Activated CD8-positive, alpha-beta T cell treated with anti-CD3 and anti-CD28 coated beads, Interleukin-2, amount 10 ng/mL, durations not matched to agents 7 days and 5 days (primary cell): ENCODE measurements at regions of chr11 and their contacts with region 1.

Region 1: GRCh38 chr11:6705905-6706535 is 22.9 kb upstream of the MRPL17 start:
- DNase-seq: peak; percentile 53
- ATAC-seq: peak; percentile 47
- H3K4me3 Mint-ChIP-seq: no peak overlapping the region
- H3K27ac Mint-ChIP-seq: peak overlapping the region; percentile 51
- H3K4me1 Mint-ChIP-seq: peaks cover 6% of the 10 kb centered on the region
- H3K27me3 Mint-ChIP-seq: no peaks in the 10 kb centered on the region

Region 2: DNA sequence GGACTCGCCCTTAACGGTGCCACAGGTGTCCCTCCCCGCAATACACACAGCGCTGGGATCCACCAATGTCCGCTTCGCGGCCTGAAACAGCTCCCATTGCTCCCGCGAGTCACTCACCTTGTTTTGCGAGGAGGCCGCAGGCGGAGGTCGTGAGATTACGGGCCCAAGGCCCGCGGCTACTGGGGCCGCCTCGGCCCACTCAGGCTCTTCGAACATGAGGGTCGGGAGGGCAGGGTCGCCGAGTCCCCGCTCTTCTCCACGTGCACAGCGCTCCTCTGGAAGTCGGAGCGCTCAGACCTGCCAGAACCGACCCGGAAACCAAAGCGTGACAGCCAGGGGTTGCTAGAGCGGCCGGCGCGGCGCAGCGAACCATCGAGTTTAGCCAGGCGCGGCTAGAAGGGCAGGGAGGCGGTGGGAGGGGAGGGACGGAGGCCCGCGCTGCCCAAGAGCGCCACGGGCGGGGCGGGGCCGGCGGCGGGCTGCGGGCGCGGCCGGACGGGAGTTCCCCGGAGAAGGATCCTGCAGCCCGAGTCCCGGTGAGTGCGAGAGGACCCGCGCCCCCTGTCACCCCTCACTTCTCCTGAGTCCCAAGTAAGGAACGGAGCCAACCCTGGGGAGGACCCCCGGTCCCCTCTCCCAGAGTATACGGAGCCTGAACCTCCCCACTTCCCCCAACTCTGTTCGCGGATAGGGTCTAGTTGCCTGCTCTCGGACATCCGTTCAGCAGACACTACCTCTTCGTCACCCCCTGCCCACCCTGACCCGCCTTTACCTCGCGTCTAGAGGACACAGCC is 102.5 kb before region 1 on chr11 and contains the starts of genes ILK and RRP8:
- CTCF ChIA-PET with region 1: interaction called, 10 read pairs
- POLR2A ChIA-PET with region 1: interaction called, 3 read pairs
- DNase-seq: peak; percentile 92
- ATAC-seq: peak; percentile 82
- H3K4me3 Mint-ChIP-seq: no peak within 1 kb of the TSS
- H3K27ac Mint-ChIP-seq: no peak within 1 kb of the TSS
- H3K4me1 Mint-ChIP-seq: peaks cover 35% of the 10 kb centered on the region
- H3K27me3 Mint-ChIP-seq: no peaks in the 10 kb centered on the region
- total RNA-seq, gene ILK: 195 to 197 TPM
- total RNA-seq, gene RRP8: 28.6 to 29.8 TPM

Region 3: GRCh38 chr11:6695377-6695776 is 10.6 kb before region 1 on chr11:
- CTCF ChIA-PET with region 1: interaction called, 20 read pairs
- POLR2A ChIA-PET with region 1: no interaction called
- DNase-seq: no peak
- ATAC-seq: peak; percentile 45
- H3K4me3 Mint-ChIP-seq: no peak overlapping the region
- H3K27ac Mint-ChIP-seq: no peak overlapping the region
- H3K4me1 Mint-ChIP-seq: peaks cover 23% of the 10 kb centered on the region
- H3K27me3 Mint-ChIP-seq: no peaks in the 10 kb centered on the region

Region 4: GRCh38 chr11:6721343-6721742 is 15.3 kb after region 1 on chr11:
- CTCF ChIA-PET with region 1: interaction called, 14 read pairs
- POLR2A ChIA-PET with region 1: no interaction called
- DNase-seq: no peak
- ATAC-seq: no peak
- H3K4me3 Mint-ChIP-seq: no peak overlapping the region
- H3K27ac Mint-ChIP-seq: peak overlapping the region; percentile 44
- H3K4me1 Mint-ChIP-seq: peaks cover 46% of the 10 kb centered on the region
- H3K27me3 Mint-ChIP-seq: no peaks in the 10 kb centered on the region

Region 5: GRCh38 chr11:6737872-6738466 is 31.9 kb after region 1 on chr11:
- CTCF ChIA-PET with region 1: interaction called, 21 read pairs
- POLR2A ChIA-PET with region 1: no interaction called
- DNase-seq: peak; percentile 83
- ATAC-seq: peak; percentile 77
- H3K4me3 Mint-ChIP-seq: no peak overlapping the region
- H3K27ac Mint-ChIP-seq: no peak overlapping the region
- H3K4me1 Mint-ChIP-seq: peaks cover 87% of the 10 kb centered on the region
- H3K27me3 Mint-ChIP-seq: no peaks in the 10 kb centered on the region

Region 6: DNA sequence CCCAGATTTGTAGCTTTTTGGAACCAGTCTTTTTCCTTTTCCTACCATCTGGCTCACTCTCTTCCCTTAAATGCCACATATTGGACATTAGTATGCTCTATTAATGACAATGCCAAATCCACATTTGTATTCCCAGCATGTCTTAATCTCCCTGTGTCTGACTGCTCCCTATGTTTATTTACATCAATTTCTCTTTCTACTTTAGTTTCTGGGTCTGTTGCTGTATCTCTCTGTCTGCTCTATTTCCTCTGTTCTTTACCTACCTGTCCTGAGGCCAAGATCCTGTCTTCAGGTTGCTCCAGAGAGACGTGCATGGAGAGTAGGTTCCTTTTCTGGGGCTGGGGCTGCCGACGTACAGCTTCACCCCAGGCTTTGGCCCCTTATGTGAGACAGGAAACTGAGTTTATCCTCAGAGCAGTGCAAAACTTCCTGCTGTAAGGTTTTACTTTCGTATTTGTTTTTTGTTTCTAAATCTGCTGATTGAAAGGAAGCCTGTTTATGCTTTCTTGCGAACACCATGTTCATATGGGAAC is 40.1 kb after region 1 on chr11:
- CTCF ChIA-PET with region 1: interaction called, 15 read pairs
- POLR2A ChIA-PET with region 1: interaction called, 3 read pairs
- DNase-seq: peak; percentile 65
- ATAC-seq: peak; percentile 85
- H3K4me3 Mint-ChIP-seq: no peak overlapping the region
- H3K27ac Mint-ChIP-seq: no peak overlapping the region
- H3K4me1 Mint-ChIP-seq: peaks cover 41% of the 10 kb centered on the region
- H3K27me3 Mint-ChIP-seq: no peaks in the 10 kb centered on the region

Region 7: GRCh38 chr11:6757373-6757967 is 51.5 kb after region 1 on chr11:
- CTCF ChIA-PET with region 1: interaction called, 36 read pairs
- POLR2A ChIA-PET with region 1: no interaction called
- DNase-seq: peak; percentile 76
- ATAC-seq: peak; percentile 90
- H3K4me3 Mint-ChIP-seq: no peak overlapping the region
- H3K27ac Mint-ChIP-seq: no peak overlapping the region
- H3K4me1 Mint-ChIP-seq: no peaks in the 10 kb centered on the region
- H3K27me3 Mint-ChIP-seq: peaks cover 2% of the 10 kb centered on the region